ENCODE measurements at regions of chr1 and their contacts with region 1.

Region 1: DNA sequence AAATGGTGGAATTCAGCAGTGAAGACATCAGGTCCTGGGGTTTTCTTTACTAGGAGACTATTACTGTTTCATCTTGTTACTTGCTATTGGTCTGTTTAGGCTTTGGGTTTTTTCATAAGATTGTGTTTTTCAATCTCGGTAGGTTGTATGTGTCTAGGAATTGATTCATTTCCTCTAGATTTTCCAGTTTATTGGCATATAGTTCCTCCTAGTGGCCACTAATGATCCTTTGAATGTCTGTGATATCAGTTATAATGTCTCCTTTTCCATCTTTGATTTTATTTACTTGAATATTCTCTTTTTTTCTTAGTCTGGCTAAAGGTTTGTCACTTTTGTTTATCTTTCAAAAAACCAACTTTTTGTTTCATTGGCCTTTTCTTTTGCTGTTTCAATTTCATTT is 233.0 kb downstream of the RWDD3 start:
- H3K4me3 Mint-ChIP-seq: no peak overlapping the region
- H3K27ac Mint-ChIP-seq: no peak overlapping the region
- H3K4me1 Mint-ChIP-seq: no peaks in the 10 kb centered on the region
- H3K27me3 Mint-ChIP-seq: no peaks in the 10 kb centered on the region

Region 2: DNA sequence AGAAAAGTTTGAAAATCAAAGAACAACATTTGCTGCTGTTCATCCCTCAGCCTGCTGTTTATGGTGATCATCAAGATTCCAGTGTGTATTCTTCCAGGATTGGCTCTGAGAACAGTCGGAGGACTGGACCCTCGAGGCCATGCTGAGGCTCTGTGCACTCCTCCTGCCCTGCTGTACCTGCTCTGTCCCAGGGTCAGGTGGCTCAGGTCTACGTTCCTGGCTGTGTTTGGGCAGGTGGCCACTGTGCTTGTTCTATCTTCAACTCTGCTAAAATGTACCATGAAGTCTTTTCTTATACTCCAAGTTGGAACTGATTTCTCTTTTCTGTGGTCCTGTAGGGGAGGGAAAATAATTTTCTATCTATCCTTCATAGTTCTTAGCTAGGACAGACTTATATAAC is 57.1 kb before region 1 on chr1:
- intact Hi-C with region 1: loop called (anchors 5 kb)
- H3K4me3 Mint-ChIP-seq: no peak overlapping the region
- H3K27ac Mint-ChIP-seq: no peak overlapping the region
- H3K4me1 Mint-ChIP-seq: no peaks in the 10 kb centered on the region
- H3K27me3 Mint-ChIP-seq: no peaks in the 10 kb centered on the region

Region 3: GRCh38 chr1:96424877-96425276 is 957.8 kb after region 1 on chr1:
- intact Hi-C with region 1: no loop called
- H3K4me3 Mint-ChIP-seq: no peak overlapping the region
- H3K27ac Mint-ChIP-seq: no peak overlapping the region
- H3K4me1 Mint-ChIP-seq: no peaks in the 10 kb centered on the region
- H3K27me3 Mint-ChIP-seq: no peaks in the 10 kb centered on the region